Ovary (tissue), 10 donors: ENCODE measurements at regions of chr18 and their contacts with region 1.

Region 1: GRCh38 chr18:79528846-79529245 is 133.1 kb downstream of the NFATC1 start:
- DNase-seq: peak; percentile 53 to 76 (median 71)
- H3K4me3 ChIP-seq: no peak overlapping the region
- H3K27ac ChIP-seq: no peak overlapping the region
- H3K4me1 ChIP-seq: no peaks in the 10 kb centered on the region
- H3K27me3 ChIP-seq: no peaks in the 10 kb centered on the region
- CTCF ChIP-seq: peak; percentile 65 to 82 (median 71)
- EP300 ChIP-seq: no peak
- POLR2A ChIP-seq: no peak

Region 2: GRCh38 chr18:79378542-79379250 is 150.2 kb before region 1 on chr18:
- intact Hi-C with region 1: loop called (anchors 2 to 5 kb)
- DNase-seq: peak; percentile 71 to 89 (median 82)
- H3K4me3 ChIP-seq: no peak overlapping the region
- H3K27ac ChIP-seq: no peak overlapping the region
- H3K4me1 ChIP-seq: peaks cover 2% of the 10 kb centered on the region
- H3K27me3 ChIP-seq: no peaks in the 10 kb centered on the region
- CTCF ChIP-seq: peak; percentile 90 to 96 (median 91)
- EP300 ChIP-seq: no peak
- POLR2A ChIP-seq: peak; percentile 41

Region 3: DNA sequence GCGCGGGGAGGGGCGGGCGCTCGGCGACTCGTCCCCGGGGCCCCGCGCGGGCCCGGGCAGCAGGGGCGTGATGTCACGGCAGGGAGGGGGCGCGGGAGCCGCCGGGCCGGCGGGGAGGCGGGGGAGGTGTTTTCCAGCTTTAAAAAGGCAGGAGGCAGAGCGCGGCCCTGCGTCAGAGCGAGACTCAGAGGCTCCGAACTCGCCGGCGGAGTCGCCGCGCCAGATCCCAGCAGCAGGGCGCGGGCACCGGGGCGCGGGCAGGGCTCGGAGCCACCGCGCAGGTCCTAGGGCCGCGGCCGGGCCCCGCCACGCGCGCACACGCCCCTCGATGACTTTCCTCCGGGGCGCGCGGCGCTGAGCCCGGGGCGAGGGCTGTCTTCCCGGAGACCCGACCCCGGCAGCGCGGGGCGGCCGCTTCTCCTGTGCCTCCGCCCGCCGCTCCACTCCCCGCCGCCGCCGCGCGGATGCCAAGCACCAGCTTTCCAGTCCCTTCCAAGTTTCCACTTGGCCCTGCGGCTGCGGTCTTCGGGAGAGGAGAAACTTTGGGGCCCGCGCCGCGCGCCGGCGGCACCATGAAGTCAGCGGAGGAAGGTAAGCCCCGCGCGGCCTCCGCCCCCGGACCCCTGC is 133.0 kb before region 1 on chr18 and contains the start of gene NFATC1:
- intact Hi-C with region 1: loop called in 1 of 4 experiments (anchors 5 kb)
- DNase-seq: peak; percentile 73 to 91 (median 90)
- H3K4me3 ChIP-seq: peak within 1 kb of the TSS; percentile 56
- H3K27ac ChIP-seq: peak within 1 kb of the TSS; percentile 82 to 92
- H3K4me1 ChIP-seq: peaks cover 5% of the 10 kb centered on the region
- H3K27me3 ChIP-seq: no peaks in the 10 kb centered on the region
- CTCF ChIP-seq: no peak
- EP300 ChIP-seq: no peak
- POLR2A ChIP-seq: peak; percentile 79
- total RNA-seq, gene NFATC1: 10.2 to 28.3 (median 12.3) TPM

Region 4: GRCh38 chr18:79841936-79842335 is 313.1 kb after region 1 on chr18:
- intact Hi-C with region 1: no loop called
- DNase-seq: no peak
- H3K4me3 ChIP-seq: no peak overlapping the region
- H3K27ac ChIP-seq: no peak overlapping the region
- H3K4me1 ChIP-seq: no peaks in the 10 kb centered on the region
- H3K27me3 ChIP-seq: no peaks in the 10 kb centered on the region
- CTCF ChIP-seq: no peak
- EP300 ChIP-seq: no peak
- POLR2A ChIP-seq: no peak